CD8-positive, alpha-beta T cell (primary cell): ENCODE measurements at regions of chr12 and their contacts with region 1.

Region 1: GRCh38 chr12:124992874-124993625 is 395 bp upstream of the BRI3BP start:
- DNase-seq: peak; percentile 63 to 94 (median 82)
- ATAC-seq: peak; percentile 63
- H3K4me3 ChIP-seq: peak overlapping the region; percentile 47 to 67
- H3K4me3 Mint-ChIP-seq: peak overlapping the region; percentile 90
- H3K27ac ChIP-seq: peak overlapping the region; percentile 17 to 54
- H3K27ac Mint-ChIP-seq: peak overlapping the region; percentile 33
- H3K4me1 ChIP-seq: peaks cover 20% of the 10 kb centered on the region
- H3K4me1 Mint-ChIP-seq: peaks cover 34% of the 10 kb centered on the region
- H3K27me3 ChIP-seq: no peaks in the 10 kb centered on the region
- H3K27me3 Mint-ChIP-seq: no peaks in the 10 kb centered on the region
- CTCF ChIP-seq: peak; percentile 68

Region 2: GRCh38 chr12:123972457-123973401 is 1020.3 kb before region 1 on chr12 and contains the starts of genes CCDC92 and ZNF664:
- CTCF ChIA-PET with region 1: no interaction called
- POLR2A ChIA-PET with region 1: no interaction called
- intact Hi-C with region 1: loop called in 1 of 2 experiments (anchors 5 kb)
- DNase-seq: peak; percentile 88 to 98 (median 95)
- ATAC-seq: peak; percentile 75
- H3K4me3 ChIP-seq: peak within 1 kb of the TSS; percentile 60 to 63
- H3K4me3 Mint-ChIP-seq: peak within 1 kb of the TSS; percentile 91
- H3K27ac ChIP-seq: peak within 1 kb of the TSS; percentile 34 to 44
- H3K27ac Mint-ChIP-seq: peak within 1 kb of the TSS; percentile 89
- H3K4me1 ChIP-seq: peaks cover 19% of the 10 kb centered on the region
- H3K4me1 Mint-ChIP-seq: peaks cover 36% of the 10 kb centered on the region
- H3K27me3 ChIP-seq: no peaks in the 10 kb centered on the region
- H3K27me3 Mint-ChIP-seq: no peaks in the 10 kb centered on the region
- CTCF ChIP-seq: no peak
- total RNA-seq, gene CCDC92: 6.9 to 8.1 TPM
- total RNA-seq, gene ZNF664: 14.2 to 17.9 TPM

Region 3: GRCh38 chr12:124906606-124907261 is 86.3 kb before region 1 on chr12:
- CTCF ChIA-PET with region 1: interaction called, 10 read pairs
- POLR2A ChIA-PET with region 1: no interaction called
- intact Hi-C with region 1: loop called in 1 of 2 experiments (anchors 2 kb)
- DNase-seq: peak; percentile 81 to 95 (median 91)
- ATAC-seq: peak; percentile 96
- H3K4me3 ChIP-seq: no peak overlapping the region
- H3K4me3 Mint-ChIP-seq: no peak overlapping the region
- H3K27ac ChIP-seq: no peak overlapping the region
- H3K27ac Mint-ChIP-seq: peak overlapping the region; percentile 42
- H3K4me1 ChIP-seq: peaks cover 11% of the 10 kb centered on the region
- H3K4me1 Mint-ChIP-seq: peaks cover 28% of the 10 kb centered on the region
- H3K27me3 ChIP-seq: no peaks in the 10 kb centered on the region
- H3K27me3 Mint-ChIP-seq: no peaks in the 10 kb centered on the region
- CTCF ChIP-seq: peak; percentile 99

Region 4: GRCh38 chr12:124940549-124941527 is 52.2 kb before region 1 on chr12:
- CTCF ChIA-PET with region 1: interaction called, 8 read pairs
- POLR2A ChIA-PET with region 1: interaction called, 3 read pairs
- intact Hi-C with region 1: loop called in 1 of 2 experiments (anchors 2 kb)
- DNase-seq: peak; percentile 53 to 91 (median 82)
- ATAC-seq: peak; percentile 64
- H3K4me3 ChIP-seq: peak overlapping the region; percentile 65 to 81
- H3K4me3 Mint-ChIP-seq: no peak overlapping the region
- H3K27ac ChIP-seq: peak overlapping the region; percentile 46 to 79
- H3K27ac Mint-ChIP-seq: no peak overlapping the region
- H3K4me1 ChIP-seq: peaks cover 23% of the 10 kb centered on the region
- H3K4me1 Mint-ChIP-seq: peaks cover 11% of the 10 kb centered on the region
- H3K27me3 ChIP-seq: no peaks in the 10 kb centered on the region
- H3K27me3 Mint-ChIP-seq: no peaks in the 10 kb centered on the region
- CTCF ChIP-seq: peak; percentile 88

Region 5: DNA sequence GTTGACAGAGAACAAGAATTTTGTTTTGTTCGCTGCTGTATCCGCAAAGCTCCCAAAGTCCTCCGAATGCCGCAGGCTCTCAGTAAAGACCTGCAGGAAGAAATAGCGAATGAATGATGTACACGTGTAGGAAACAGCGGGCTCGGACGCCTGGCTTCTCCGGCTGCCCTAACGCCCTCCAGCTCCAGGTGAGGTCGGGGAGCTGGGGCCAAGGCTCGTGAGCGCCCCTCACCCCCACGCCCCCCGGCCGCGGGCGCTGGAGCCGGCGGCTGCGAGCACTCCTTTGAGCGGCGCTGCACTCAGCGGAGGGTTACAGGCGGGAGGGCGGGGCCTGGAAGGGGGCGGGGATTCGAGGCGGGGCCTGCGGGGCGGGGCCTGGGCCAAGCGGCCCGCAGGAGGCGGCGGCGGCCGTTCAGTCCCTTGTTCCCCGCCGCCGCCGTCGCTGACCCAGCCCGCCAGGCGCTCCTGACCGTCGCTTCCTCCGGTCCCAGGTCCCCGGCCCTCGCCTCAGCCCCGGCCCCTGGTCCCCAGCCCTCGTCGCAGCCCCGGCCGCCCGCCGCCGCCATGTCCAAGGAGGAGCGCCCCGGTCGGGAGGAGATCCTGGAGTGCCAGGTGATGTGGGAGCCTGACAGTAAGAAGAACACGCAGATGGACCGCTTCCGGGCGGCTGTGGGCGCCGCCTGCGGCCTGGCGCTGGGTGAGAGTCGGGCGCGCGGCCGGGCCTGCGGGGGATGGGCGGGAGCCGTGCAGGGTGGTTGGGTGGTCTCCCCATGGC is 72.2 kb after region 1 on chr12 and contains the start of gene AACS:
- CTCF ChIA-PET with region 1: interaction called, 4 read pairs
- POLR2A ChIA-PET with region 1: interaction called, 3 read pairs
- intact Hi-C with region 1: loop called (anchors 1 kb)
- DNase-seq: peak; percentile 59 to 85 (median 74)
- ATAC-seq: peak; percentile 96
- H3K4me3 ChIP-seq: peak within 1 kb of the TSS; percentile 67 to 98
- H3K4me3 Mint-ChIP-seq: peak within 1 kb of the TSS; percentile 86
- H3K27ac ChIP-seq: peak within 1 kb of the TSS; percentile 25 to 33
- H3K27ac Mint-ChIP-seq: peak within 1 kb of the TSS; percentile 69
- H3K4me1 ChIP-seq: peaks cover 10% of the 10 kb centered on the region
- H3K4me1 Mint-ChIP-seq: peaks cover 21% of the 10 kb centered on the region
- H3K27me3 ChIP-seq: no peaks in the 10 kb centered on the region
- H3K27me3 Mint-ChIP-seq: peaks cover 1% of the 10 kb centered on the region
- CTCF ChIP-seq: no peak
- total RNA-seq, gene AACS: 11.0 to 12.3 TPM